Gastrocnemius medialis (tissue), 4 donors: ENCODE measurements at regions of chr13 and their contacts with region 1.

Region 1: GRCh38 chr13:20997430-20998161 is 63.8 kb downstream of the LATS2 start:
- DNase-seq: peak in 1 of 2 donors; percentile 48
- ATAC-seq: no peak
- H3K4me3 ChIP-seq: no peak overlapping the region
- H3K27ac ChIP-seq: peak overlapping the region; percentile 77 to 90 (median 87)
- H3K4me1 ChIP-seq: peaks cover 41 to 50% of the 10 kb centered on the region in 2 donors
- H3K27me3 ChIP-seq: no peaks in the 10 kb centered on the region
- CTCF ChIP-seq: no peak
- POLR2A ChIP-seq: no peak

Region 2: GRCh38 chr13:20814224-20814910 is 183.2 kb before region 1 on chr13:
- in situ Hi-C with region 1: no loop called
- intact Hi-C with region 1: loop called (anchors 10 kb)
- DNase-seq: peak; percentile 85 to 95
- ATAC-seq: peak; percentile 94 to 96
- H3K4me3 ChIP-seq: peak overlapping the region in 3 of 4 donors; percentile 12 to 45 (median 29)
- H3K27ac ChIP-seq: peak overlapping the region; percentile 87 to 93 (median 88)
- H3K4me1 ChIP-seq: peaks cover 46 to 63% of the 10 kb centered on the region in 2 donors
- H3K27me3 ChIP-seq: no peaks in the 10 kb centered on the region
- CTCF ChIP-seq: no peak
- POLR2A ChIP-seq: no peak

Region 3: DNA sequence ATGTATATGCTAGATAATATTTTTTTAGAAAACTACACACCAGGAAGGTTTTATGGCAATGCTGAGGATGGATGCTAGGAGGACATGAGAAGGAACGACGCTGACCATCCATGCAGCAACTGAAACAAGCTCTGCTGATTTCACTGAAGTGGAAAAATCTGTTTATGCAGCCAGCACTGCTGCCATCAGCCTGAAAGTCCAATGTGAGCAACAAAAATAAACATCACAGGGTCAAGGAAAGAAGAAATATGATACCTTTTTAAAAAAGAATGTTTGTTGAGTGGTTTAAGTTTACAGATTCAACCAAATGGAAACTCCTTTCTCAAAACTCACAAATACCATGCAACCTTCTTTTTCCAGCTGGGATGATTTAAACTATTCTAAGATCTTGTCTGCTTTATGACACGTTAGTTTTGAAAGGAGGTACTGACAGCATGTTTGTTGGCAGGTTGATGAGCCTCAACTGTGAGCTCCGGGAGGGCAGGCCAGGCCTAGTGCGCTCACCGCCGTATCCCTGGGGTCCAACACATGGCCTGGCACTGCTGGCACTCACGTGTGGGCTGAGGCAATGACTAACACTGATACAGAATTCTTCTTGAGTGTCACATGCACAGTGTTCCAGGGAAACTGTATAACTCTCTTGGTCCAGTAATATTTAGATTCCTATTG is 17.0 kb after region 1 on chr13:
- in situ Hi-C with region 1: no loop called
- intact Hi-C with region 1: loop called (anchors 2 kb)
- DNase-seq: peak; percentile 78 to 90
- ATAC-seq: peak; percentile 82
- H3K4me3 ChIP-seq: no peak overlapping the region
- H3K27ac ChIP-seq: peak overlapping the region; percentile 86 to 91 (median 88)
- H3K4me1 ChIP-seq: peaks cover 84 to 91% of the 10 kb centered on the region in 2 donors
- H3K27me3 ChIP-seq: no peaks in the 10 kb centered on the region
- CTCF ChIP-seq: no peak
- POLR2A ChIP-seq: peak in 1 of 2 donors; percentile 31